ENCODE measurements at regions of chr10 and their contacts with region 1.

Region 1: GRCh38 chr10:50325449-50326171 is 74.3 kb upstream of the ASAH2 start:
- DNase-seq: no peak

Region 2: DNA sequence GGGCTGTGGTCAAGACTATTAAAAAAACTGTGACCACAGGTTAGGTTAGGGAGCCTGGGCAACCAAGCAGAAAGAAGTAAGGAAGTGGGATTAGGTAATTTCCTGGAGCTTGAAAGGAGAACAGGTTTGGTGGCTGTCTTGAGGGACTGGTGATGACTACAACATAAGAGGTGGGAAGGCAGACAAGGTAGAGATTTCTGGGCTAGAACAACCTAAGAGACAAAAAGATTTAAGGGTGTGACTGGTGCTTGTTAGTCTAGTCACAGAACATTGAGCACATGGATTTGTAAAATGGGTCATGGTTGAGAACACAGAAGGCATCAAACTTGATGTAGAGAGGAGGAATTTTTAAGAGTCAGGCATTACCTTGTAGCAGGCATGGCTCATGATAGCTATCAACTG is 49.4 kb after region 1 on chr10:
- intact Hi-C with region 1: loop called (anchors 5 kb)
- DNase-seq: no peak

Region 3: GRCh38 chr10:50417886-50418830 is 92.5 kb after region 1 on chr10:
- intact Hi-C with region 1: loop called (anchors 2 kb)
- DNase-seq: peak; percentile 87

Measured in cardiac septum (tissue), 1 donor.